Cardiac septum (tissue), 1 donor: ENCODE measurements at regions of chr5 and their contacts with region 1.

Region 1: DNA sequence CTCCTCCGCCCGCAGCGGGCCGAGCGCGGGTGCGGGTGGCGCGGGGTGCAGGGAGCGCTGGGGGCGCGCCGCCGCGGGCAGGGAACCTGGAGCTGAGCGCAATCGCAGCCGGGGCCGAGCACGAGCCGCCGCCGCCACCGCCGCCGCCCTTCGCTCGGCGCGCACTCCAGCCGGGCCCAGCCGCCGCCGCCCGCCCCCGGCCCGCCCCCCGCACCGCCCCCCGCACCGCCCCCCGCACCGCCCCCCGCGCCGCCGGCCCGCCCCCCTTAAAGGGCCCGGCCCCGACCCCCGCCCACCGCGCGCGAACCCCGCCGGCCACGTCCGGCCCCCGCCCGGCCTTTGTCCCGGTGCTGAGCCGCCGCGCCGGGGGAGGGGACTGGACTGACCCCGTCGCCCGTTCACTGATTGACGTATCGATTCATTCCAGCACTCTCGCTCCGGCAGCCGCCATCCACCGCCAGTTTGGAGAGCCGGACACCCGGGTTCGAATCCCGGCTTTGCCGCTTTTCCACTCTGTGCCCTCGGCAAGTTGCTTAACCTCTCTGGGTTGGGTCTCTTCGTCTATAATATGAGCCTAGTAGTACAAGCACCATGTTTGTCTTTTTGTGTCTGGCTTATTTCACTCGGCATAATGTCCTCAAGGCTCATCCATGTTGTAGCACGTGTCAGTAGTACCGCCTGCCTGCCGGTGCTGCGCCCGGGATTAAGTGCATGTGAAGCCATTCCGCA is at the start of gene SH3PXD2B:
- DNase-seq: peak; percentile 79
- total RNA-seq, gene SH3PXD2B: 5.1 TPM

Region 2: DNA sequence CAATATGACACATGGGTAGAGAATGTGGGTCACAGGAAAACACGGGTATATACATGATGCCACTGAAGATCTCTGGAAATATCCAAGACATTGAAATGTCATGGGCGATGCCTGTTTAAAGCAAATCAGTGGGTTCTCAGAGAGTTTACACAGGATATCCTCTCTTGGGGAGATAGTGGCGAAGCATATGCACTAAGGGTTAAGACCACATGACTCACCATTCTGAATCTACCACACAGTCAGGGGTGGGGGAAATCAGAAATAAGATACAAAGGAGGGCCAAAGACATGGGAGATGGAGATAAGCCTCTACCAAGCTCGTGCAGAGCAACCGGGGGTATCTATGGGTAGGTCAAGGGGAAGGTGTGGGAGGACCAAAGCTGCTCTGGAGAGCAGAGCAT is 59.0 kb before region 1 on chr5:
- intact Hi-C with region 1: no loop called
- DNase-seq: peak; percentile 0

Region 3: GRCh38 chr5:172417983-172418630 is 36.4 kb before region 1 on chr5:
- intact Hi-C with region 1: loop called (anchors 2 kb)
- DNase-seq: peak; percentile 88